ENCODE measurements at regions of chr12 and their contacts with region 1.

Region 1: GRCh38 chr12:110468212-110469048 is at the starts of genes FAM216A and GPN3:
- DNase-seq: peak; percentile 97
- ATAC-seq: peak; percentile 78
- H3K4me3 Mint-ChIP-seq: peak within 1 kb of the TSS; percentile 89
- H3K27ac Mint-ChIP-seq: peak within 1 kb of the TSS; percentile 98
- H3K4me1 Mint-ChIP-seq: peaks cover 33% of the 10 kb centered on the region
- H3K27me3 Mint-ChIP-seq: no peaks in the 10 kb centered on the region
- total RNA-seq, gene FAM216A: 55.2 to 57.5 TPM
- total RNA-seq, gene GPN3: 37.8 to 62.0 TPM

Region 2: DNA sequence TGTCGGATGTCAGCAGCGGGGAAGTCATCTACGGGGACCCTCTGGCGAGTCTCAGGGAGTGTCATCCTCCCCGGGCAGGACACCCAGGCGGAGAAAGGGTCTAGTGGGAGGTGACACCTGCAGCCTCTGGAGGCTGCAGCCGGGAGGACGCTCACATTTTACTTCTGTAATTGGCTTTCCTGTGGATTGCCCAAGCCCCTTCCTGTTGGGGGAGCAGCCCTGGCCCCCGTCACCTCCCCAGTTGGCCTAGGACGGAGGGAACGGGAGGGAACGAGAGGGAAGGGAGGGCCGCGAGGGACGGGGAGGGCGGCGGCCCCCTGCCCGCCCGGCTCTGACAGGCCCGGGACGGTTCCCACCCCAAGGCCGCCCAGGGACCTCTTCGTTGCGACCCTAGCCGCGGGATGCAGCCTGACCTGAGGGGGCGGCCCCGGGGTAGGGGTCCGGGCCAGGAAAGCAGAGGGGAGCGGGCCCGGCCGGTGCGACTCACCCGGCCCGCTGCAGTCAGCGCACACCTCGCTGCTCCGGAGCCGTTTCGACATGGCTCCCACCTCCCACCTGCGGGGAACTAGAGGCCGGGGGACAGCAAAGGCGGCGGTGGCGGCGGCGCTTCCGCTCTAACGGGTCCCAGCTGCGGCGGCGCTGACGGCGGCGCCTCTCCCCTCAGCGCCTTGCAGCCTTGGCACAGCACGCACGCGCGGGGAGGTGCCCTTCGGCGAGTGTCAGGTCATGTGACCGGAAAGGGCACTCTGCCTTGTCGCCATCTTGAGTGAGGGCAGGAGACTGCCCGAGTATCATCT is 472.5 kb before region 1 on chr12 and contains the start of gene GIT2:
- CTCF ChIA-PET with region 1: no interaction called
- POLR2A ChIA-PET with region 1: no interaction called
- intact Hi-C with region 1: loop called in 1 of 2 experiments (anchors 1 kb)
- DNase-seq: peak; percentile 98
- ATAC-seq: peak; percentile 85
- H3K4me3 Mint-ChIP-seq: peak within 1 kb of the TSS; percentile 99
- H3K27ac Mint-ChIP-seq: peak within 1 kb of the TSS; percentile 97
- H3K4me1 Mint-ChIP-seq: peaks cover 65% of the 10 kb centered on the region
- H3K27me3 Mint-ChIP-seq: no peaks in the 10 kb centered on the region
- total RNA-seq, gene GIT2: 50.2 to 58.2 TPM

Region 3: GRCh38 chr12:110431957-110432587 is 36.4 kb before region 1 on chr12:
- CTCF ChIA-PET with region 1: interaction called, 16 read pairs
- POLR2A ChIA-PET with region 1: interaction called, 10 read pairs
- intact Hi-C with region 1: no loop called
- DNase-seq: peak; percentile 54
- ATAC-seq: peak; percentile 45
- H3K4me3 Mint-ChIP-seq: peak overlapping the region; percentile 93
- H3K27ac Mint-ChIP-seq: no peak overlapping the region
- H3K4me1 Mint-ChIP-seq: peaks cover 11% of the 10 kb centered on the region
- H3K27me3 Mint-ChIP-seq: no peaks in the 10 kb centered on the region

Region 4: GRCh38 chr12:110577717-110578521 is 109.5 kb after region 1 on chr12:
- CTCF ChIA-PET with region 1: interaction called, 3 read pairs
- POLR2A ChIA-PET with region 1: interaction called, 3 read pairs
- intact Hi-C with region 1: loop called (anchors 1 kb)
- DNase-seq: peak; percentile 61
- ATAC-seq: peak; percentile 67
- H3K4me3 Mint-ChIP-seq: peak overlapping the region; percentile 91
- H3K27ac Mint-ChIP-seq: peak overlapping the region; percentile 100
- H3K4me1 Mint-ChIP-seq: peaks cover 80% of the 10 kb centered on the region
- H3K27me3 Mint-ChIP-seq: no peaks in the 10 kb centered on the region

Region 5: DNA sequence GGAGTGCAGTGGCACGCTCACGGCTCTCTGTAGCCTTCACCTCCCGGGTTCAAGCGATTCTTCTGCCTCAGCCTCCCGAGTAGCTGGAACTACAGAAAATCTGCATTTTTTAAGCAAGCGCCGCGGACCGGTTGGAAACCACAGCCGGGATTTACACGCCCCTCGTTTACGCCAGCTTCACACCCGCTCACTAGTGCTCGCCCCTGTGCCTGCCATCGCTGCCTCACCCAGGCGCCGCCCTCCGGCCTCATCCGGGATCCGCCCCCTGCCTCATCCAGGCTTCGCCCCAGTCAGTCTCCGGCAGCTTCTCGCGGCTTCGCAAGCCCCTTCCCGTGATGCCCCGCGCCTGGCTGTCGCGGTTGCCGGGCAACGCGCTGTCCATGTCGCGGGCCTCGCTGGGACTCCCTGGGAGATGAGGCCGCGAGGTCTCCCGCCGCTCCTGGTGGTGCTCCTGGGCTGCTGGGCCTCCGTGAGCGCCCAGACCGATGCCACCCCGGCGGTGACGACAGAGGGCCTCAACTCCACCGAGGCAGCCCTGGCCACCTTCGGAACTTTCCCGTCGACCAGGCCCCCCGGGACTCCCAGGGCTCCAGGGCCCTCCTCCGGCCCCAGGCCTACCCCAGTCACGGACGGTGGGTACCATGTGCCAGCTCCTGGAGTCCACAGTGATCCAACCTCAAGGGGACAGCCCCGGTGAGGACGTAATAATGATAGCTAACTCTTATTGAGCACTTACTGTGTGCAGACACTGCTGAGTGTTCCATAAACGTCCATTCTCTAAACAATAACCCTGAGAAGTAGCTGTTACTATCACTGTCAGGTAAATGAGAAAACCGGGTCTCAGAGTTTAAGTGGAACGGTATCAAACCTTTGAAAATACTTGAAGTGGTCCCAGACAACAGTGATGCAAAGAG is 145.6 kb after region 1 on chr12 and contains the start of gene TCTN1:
- CTCF ChIA-PET with region 1: interaction called, 5 read pairs
- POLR2A ChIA-PET with region 1: interaction called, 3 read pairs
- intact Hi-C with region 1: loop called in 1 of 2 experiments (anchors 1 kb)
- DNase-seq: peak; percentile 99
- ATAC-seq: peak; percentile 99
- H3K4me3 Mint-ChIP-seq: peak within 1 kb of the TSS; percentile 78
- H3K27ac Mint-ChIP-seq: peak within 1 kb of the TSS; percentile 67
- H3K4me1 Mint-ChIP-seq: peaks cover 12% of the 10 kb centered on the region
- H3K27me3 Mint-ChIP-seq: no peaks in the 10 kb centered on the region
- total RNA-seq, gene TCTN1: 7.2 to 7.3 TPM

Region 6: DNA sequence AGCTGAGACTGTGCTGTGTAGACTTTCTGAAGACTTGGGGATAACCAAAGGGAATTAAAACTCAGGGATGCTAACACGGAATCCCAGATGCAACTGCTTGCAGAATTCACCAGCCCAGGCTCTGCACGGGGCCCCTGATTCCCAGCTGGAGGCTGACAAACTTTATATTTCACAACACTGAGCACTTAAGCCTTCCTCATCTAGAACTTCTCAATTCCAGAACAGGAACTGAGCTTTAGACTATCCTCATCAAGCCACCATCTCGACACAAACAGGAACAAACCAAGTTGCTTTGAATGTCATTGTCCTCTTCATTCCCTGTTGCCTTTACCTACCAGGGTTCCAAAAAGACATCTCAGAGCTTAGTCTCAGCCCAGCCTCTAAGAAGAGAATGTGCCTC is 400.6 kb after region 1 on chr12:
- CTCF ChIA-PET with region 1: no interaction called
- POLR2A ChIA-PET with region 1: no interaction called
- intact Hi-C with region 1: no loop called
- DNase-seq: no peak
- ATAC-seq: no peak
- H3K4me3 Mint-ChIP-seq: no peak overlapping the region
- H3K27ac Mint-ChIP-seq: no peak overlapping the region
- H3K4me1 Mint-ChIP-seq: no peaks in the 10 kb centered on the region
- H3K27me3 Mint-ChIP-seq: no peaks in the 10 kb centered on the region

Region 7: DNA sequence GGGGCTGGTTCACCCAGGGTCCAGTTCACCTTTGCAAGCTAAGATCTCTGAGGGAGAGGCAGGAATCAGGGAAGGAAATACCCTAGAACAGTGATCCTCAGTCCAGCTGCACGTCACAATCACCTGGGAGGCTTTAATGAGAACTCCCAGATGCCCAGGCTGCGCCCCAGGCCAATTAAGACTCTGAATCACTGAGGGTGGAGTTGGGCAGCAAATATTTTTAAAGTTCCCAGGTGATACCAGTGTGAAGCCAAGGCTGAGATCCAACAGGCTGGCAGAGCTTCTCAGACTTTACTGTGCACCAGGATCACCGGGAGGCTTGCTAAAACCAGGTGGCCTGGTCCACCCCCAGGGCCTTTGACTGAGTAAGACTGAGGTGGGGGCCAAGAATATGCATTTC is 428.1 kb after region 1 on chr12:
- CTCF ChIA-PET with region 1: no interaction called
- POLR2A ChIA-PET with region 1: no interaction called
- intact Hi-C with region 1: loop called in 1 of 2 experiments (anchors 5 kb)
- DNase-seq: no peak
- ATAC-seq: no peak
- H3K4me3 Mint-ChIP-seq: no peak overlapping the region
- H3K27ac Mint-ChIP-seq: no peak overlapping the region
- H3K4me1 Mint-ChIP-seq: peaks cover 5% of the 10 kb centered on the region
- H3K27me3 Mint-ChIP-seq: peaks cover 13% of the 10 kb centered on the region

Region 8: DNA sequence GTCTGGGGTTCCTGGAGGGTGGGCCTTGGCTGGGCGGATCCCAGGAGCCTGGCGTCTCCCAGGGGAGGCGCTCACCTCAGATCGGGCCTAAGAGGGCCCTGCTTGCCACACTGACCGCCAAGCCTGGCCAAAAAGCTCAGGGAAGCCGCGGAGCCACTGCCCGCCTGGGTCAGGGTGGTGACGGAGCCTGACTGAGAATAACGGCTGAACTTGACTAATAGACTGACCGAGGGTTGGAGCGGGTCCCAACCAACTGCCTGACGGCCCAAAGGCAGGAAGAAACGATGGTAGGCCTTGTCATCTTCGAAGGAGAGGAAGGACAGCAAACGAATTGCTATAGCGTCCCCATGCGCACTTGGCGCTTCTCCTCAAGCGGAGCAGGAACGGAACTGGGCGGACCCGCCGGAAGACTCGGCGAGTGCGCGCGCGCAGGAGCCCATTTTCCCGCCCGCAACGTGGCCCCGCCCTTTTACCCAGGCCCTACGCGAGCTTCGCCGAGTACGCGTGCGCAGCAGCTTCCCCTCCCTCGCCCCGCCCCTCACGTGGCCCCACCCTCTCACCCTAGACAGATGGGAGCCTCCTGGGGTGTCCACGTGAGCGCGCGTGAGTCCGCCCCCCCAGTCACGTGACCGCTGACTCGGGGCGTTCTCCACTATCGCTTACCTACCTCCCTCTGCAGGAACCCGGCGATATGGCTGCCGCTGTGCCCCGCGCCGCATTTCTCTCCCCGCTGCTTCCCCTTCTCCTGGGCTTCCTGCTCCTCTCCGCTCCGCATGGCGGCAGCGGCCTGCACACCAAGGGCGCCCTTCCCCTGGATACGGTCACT is 1544.6 kb after region 1 on chr12 and contains the starts of genes ERP29 and TMEM116:
- CTCF ChIA-PET with region 1: no interaction called
- POLR2A ChIA-PET with region 1: no interaction called
- intact Hi-C with region 1: loop called in 1 of 2 experiments (anchors 5 kb)
- DNase-seq: peak; percentile 100
- ATAC-seq: peak; percentile 80
- H3K4me3 Mint-ChIP-seq: peak within 1 kb of the TSS; percentile 98
- H3K27ac Mint-ChIP-seq: peak within 1 kb of the TSS; percentile 99
- H3K4me1 Mint-ChIP-seq: peaks cover 53% of the 10 kb centered on the region
- H3K27me3 Mint-ChIP-seq: no peaks in the 10 kb centered on the region
- total RNA-seq, gene ERP29: 79.7 to 87.3 TPM
- total RNA-seq, gene TMEM116: 11.2 to 12.5 TPM

Measured in activated CD4-positive, alpha-beta T cell treated with anti-CD3 and anti-CD28 coated beads for 36 hours (primary cell).